ENCODE measurements at regions of chr21 and their contacts with region 1.

Region 1: DNA sequence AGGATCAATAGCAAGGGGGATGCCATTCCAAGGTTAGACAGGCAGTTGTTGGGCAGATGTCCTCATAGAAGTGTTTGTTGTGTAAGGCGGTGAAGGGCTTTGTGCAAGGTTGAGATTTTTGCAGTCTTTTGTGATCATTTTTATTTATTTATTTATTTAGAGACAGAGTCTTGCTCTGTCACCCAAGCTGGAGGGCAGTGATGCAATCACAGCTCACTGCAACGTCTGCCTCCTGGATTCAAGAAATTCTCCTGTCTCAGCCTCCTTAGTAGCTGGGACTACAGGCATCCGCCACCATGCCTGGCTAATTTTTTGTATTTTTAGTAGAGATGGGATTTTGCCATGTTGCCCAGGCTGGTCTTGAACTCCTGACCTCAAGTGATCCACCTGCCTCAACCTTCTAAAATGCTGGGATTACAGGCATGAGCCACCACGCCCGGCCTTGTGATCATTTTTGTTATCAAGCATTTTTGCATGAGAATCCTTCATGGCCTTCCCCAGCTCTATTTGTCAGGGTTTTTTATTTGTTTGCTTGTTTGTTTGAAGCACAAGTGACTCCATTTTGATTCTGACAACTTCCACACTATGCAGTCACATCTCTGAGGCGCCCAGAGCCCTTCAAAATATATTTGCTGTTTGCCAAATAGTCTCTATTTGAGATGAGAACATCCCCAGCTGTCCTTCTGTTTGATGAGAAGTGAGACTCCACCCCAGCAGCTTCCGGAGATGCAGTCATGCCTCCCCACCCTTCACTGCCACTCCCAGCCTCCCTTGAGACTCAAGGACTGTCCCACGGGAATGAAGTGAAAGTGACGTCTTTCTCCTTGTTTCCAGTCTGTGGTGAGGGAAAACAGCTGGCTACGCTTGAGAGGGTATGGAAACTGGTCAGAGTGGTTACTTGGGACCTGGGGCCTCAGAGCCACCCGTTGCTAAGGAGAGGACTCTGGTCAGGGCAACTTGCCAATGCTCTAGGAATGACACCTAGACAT is 38.0 kb downstream of the TMEM50B start:
- DNase-seq: peak; percentile 53
- H3K4me3 ChIP-seq: no peak overlapping the region
- H3K27me3 ChIP-seq: no peaks in the 10 kb centered on the region
- CTCF ChIP-seq: no peak

Region 2: DNA sequence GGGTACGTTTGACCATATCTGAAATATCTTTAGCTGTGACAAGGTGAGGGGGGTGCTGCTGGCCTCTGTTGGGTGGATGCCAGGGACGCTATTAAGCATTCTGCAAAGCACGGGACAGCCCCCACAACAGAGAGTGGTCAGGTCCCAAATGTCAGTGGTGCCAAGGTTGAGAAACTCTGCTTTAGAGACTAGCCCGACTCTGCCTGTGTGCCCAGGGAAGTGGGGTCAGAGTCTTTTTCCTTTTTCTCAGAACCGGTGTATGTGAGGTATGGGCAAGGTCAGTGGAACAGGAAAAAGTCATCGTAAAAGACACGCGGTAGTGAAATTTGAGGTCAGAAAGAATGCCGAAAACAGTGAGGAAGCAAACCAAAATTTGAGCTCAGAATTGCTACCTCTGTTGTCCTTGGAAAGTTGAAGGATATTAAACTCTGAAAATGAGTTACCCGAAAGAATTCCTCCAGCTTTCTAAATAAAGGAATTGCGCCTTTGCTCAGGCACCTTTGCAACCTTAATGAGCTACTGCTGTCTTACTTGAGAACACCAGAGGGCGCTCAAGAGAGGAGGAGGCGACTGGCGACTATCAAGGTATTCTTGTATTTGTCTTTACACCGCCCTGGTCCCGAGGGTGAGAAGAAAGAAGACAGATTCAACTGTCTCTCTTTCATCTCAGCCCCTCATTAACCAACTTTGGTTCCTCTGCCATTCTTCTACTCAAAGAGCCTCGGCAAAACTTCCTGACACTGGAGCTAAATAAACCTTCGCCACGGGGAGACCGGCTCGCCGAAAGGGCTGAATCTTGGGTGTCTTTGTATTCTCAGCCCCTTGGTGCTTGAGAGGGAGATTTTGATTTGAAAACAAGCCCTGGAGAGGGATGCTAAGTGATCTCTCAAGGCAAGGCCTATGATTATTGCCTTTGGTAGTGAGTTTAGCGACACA is 501.4 kb before region 1 on chr21:
- CTCF ChIA-PET with region 1: interaction called, 11 read pairs
- POLR2A ChIA-PET with region 1: no interaction called
- DNase-seq: no peak
- H3K4me3 ChIP-seq: no peak overlapping the region
- H3K27me3 ChIP-seq: no peaks in the 10 kb centered on the region
- CTCF ChIP-seq: peak; percentile 82

Region 3: GRCh38 chr21:33455686-33456446 is 14.1 kb after region 1 on chr21:
- CTCF ChIA-PET with region 1: interaction called, 21 read pairs
- POLR2A ChIA-PET with region 1: no interaction called
- DNase-seq: no peak
- H3K4me3 ChIP-seq: no peak overlapping the region
- H3K27me3 ChIP-seq: no peaks in the 10 kb centered on the region
- CTCF ChIP-seq: no peak